CD4-positive, alpha-beta memory T cell (primary cell): ENCODE measurements at regions of chr17 and their contacts with region 1.

Region 1: DNA sequence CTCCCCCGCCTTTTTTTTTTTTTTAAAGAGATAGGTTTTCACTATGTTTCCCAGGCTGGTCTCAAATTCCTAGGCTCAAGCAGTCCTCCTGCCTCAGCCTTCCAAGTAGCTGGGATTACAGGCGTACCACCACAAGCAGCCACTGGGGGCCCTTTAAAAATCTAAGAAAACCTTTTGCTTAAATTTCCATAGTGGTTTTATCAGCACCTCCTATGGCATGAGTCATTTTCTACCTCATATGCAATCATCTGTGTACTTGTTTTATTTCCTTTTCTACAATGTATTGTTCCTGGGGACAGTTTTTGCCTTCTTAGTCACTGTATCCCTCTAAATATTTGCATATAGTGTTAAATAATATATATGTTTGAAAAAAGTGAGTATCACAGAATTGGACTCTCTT is 29.2 kb downstream of the GNA13 start:
- DNase-seq: peak; percentile 55 to 79 (median 58)
- H3K4me3 ChIP-seq: no peak overlapping the region
- H3K4me3 Mint-ChIP-seq: peak overlapping the region; percentile 75 to 90 (median 87)
- H3K27ac ChIP-seq: peak overlapping the region; percentile 49
- H3K27ac Mint-ChIP-seq: peak overlapping the region; percentile 90 to 98 (median 96)
- H3K4me1 ChIP-seq: peaks cover 99% of the 10 kb centered on the region
- H3K4me1 Mint-ChIP-seq: peaks cover 61 to 94% (median 78%) of the 10 kb centered on the region in 4 donors
- H3K27me3 ChIP-seq: no peaks in the 10 kb centered on the region
- H3K27me3 Mint-ChIP-seq: no peaks in the 10 kb centered on the region

Region 2: GRCh38 chr17:65013613-65014391 is 13.5 kb before region 1 on chr17:
- CTCF ChIA-PET with region 1: interaction called, 10 read pairs
- POLR2A ChIA-PET with region 1: interaction called, 3 read pairs
- intact Hi-C with region 1: loop called (anchors 2 kb)
- DNase-seq: peak; percentile 20 to 74 (median 35)
- H3K4me3 ChIP-seq: no peak overlapping the region
- H3K4me3 Mint-ChIP-seq: peak overlapping the region in 6 of 8 donors; percentile 2 to 52 (median 26)
- H3K27ac ChIP-seq: no peak overlapping the region
- H3K27ac Mint-ChIP-seq: peak overlapping the region; percentile 26 to 91 (median 89)
- H3K4me1 ChIP-seq: peaks cover 43% of the 10 kb centered on the region
- H3K4me1 Mint-ChIP-seq: peaks cover 55 to 91% (median 68%) of the 10 kb centered on the region in 4 donors
- H3K27me3 ChIP-seq: no peaks in the 10 kb centered on the region
- H3K27me3 Mint-ChIP-seq: no peaks in the 10 kb centered on the region

Region 3: DNA sequence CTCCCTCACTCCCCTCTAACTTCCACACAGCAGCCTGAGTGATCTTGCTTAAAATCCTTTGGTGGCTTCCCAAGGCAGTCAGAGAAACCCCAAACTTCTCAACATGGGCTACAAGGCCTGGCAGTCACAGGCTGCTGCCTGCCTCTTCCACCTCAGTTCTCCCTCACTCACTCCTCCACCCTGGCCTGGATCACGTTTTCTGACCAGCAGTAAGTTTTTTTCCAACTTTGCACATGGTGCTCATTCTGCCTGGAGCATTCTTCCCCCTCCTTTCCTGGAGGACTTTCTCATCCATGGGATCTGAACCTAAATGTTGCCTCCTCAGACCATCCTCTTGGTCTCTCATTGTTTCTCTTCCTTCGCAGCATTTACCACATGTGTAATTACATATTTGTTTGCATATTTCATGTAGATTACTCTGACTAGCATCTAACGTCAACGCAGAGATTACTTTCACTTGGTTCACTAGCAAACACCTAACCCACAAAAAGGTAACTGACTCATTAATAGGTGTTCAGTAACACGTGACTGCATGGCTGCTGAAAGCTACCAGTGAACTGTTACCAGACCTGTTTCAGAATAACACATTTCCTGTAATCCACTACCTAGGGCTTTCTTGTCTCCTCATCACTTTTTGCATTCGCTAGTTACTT is 12.2 kb after region 1 on chr17:
- CTCF ChIA-PET with region 1: interaction called, 4 read pairs
- POLR2A ChIA-PET with region 1: interaction called, 8 read pairs
- intact Hi-C with region 1: loop called (anchors 1 kb)
- DNase-seq: peak; percentile 78 to 89 (median 85)
- H3K4me3 ChIP-seq: peak overlapping the region; percentile 29 to 57
- H3K4me3 Mint-ChIP-seq: peak overlapping the region; percentile 74 to 92 (median 78)
- H3K27ac ChIP-seq: peak overlapping the region; percentile 87
- H3K27ac Mint-ChIP-seq: peak overlapping the region; percentile 82 to 99 (median 97)
- H3K4me1 ChIP-seq: peaks cover 98% of the 10 kb centered on the region
- H3K4me1 Mint-ChIP-seq: peaks cover 66 to 91% (median 77%) of the 10 kb centered on the region in 4 donors
- H3K27me3 ChIP-seq: no peaks in the 10 kb centered on the region
- H3K27me3 Mint-ChIP-seq: no peaks in the 10 kb centered on the region